ENCODE measurements at regions of chr16 and their contacts with region 1.

Region 1: DNA sequence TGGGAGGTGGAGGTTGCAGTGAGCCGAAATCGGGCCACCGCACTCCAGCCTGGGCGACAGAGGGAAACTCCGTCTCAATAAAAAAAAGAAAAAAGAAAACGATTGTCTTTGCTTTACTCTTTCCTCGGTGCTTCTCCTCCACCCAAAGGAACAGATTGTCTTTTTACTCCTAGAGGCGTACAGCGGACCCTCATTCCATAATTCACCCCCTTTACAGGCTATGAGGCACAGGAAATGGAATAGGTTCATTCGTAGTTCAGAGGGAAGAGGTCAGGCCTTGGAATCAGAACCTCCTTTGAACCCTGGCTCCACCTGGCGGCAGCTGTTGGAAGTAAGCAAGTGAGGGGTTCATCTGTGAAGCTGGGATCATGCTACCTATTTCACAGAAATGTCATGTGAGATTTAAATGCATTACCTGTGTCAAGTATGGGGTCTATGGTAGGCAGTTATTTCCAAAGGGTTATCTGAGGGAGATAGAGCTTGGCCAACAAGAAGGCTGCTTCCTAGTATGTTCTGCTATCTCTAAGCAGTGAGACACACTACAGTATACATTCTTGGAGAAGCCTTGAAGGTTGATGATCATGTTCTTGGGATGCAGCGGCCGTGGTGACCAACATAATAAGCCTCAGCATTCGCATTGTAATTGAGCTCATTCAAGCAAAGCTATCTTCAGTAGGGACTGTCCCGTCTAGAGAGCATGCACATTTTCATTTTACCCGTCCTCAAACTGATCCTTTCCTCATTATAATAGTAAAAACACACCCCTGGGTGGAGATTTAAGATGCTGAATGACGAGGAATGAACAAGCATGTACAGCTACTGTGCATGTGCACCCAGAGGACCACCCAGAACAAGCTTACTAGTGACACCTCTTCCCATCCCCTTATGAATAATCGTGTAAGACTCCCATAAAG is 18.7 kb upstream of the ZNF689 start:
- DNase-seq: peak; percentile 85
- ATAC-seq: peak; percentile 93
- H3K4me3 ChIP-seq: peak overlapping the region in 3 of 5 experiments; percentile 8 to 37 (median 28)
- H3K4me3 Mint-ChIP-seq: peak overlapping the region; percentile 68
- H3K27ac ChIP-seq: no peak overlapping the region
- H3K27ac Mint-ChIP-seq: peak overlapping the region; percentile 78
- H3K4me1 ChIP-seq: peaks cover 0 to 15% of the 10 kb centered on the region in 2 donors
- H3K4me1 Mint-ChIP-seq: peaks cover 8% of the 10 kb centered on the region
- H3K27me3 ChIP-seq: no peaks in the 10 kb centered on the region
- H3K27me3 Mint-ChIP-seq: peaks cover 1% of the 10 kb centered on the region
- CTCF ChIP-seq: peak; percentile 95

Region 2: GRCh38 chr16:30429678-30430427 is 199.0 kb before region 1 on chr16 and contains the start of gene DCTPP1:
- CTCF ChIA-PET with region 1: interaction called, 25 read pairs
- POLR2A ChIA-PET with region 1: interaction called, 9 read pairs
- intact Hi-C with region 1: loop called (anchors 2 kb)
- DNase-seq: peak; percentile 99
- ATAC-seq: peak; percentile 97
- H3K4me3 ChIP-seq: peak within 1 kb of the TSS; percentile 78 to 98 (median 85)
- H3K4me3 Mint-ChIP-seq: no peak within 1 kb of the TSS
- H3K27ac ChIP-seq: peak within 1 kb of the TSS; percentile 79 to 86
- H3K27ac Mint-ChIP-seq: peak within 1 kb of the TSS; percentile 20
- H3K4me1 ChIP-seq: peaks cover 12 to 21% of the 10 kb centered on the region in 2 donors
- H3K4me1 Mint-ChIP-seq: peaks cover 17% of the 10 kb centered on the region
- H3K27me3 ChIP-seq: no peaks in the 10 kb centered on the region
- H3K27me3 Mint-ChIP-seq: no peaks in the 10 kb centered on the region
- CTCF ChIP-seq: peak; percentile 82
- total RNA-seq, gene DCTPP1: 25.0 and 28.9 TPM in 2 replicates

Region 3: DNA sequence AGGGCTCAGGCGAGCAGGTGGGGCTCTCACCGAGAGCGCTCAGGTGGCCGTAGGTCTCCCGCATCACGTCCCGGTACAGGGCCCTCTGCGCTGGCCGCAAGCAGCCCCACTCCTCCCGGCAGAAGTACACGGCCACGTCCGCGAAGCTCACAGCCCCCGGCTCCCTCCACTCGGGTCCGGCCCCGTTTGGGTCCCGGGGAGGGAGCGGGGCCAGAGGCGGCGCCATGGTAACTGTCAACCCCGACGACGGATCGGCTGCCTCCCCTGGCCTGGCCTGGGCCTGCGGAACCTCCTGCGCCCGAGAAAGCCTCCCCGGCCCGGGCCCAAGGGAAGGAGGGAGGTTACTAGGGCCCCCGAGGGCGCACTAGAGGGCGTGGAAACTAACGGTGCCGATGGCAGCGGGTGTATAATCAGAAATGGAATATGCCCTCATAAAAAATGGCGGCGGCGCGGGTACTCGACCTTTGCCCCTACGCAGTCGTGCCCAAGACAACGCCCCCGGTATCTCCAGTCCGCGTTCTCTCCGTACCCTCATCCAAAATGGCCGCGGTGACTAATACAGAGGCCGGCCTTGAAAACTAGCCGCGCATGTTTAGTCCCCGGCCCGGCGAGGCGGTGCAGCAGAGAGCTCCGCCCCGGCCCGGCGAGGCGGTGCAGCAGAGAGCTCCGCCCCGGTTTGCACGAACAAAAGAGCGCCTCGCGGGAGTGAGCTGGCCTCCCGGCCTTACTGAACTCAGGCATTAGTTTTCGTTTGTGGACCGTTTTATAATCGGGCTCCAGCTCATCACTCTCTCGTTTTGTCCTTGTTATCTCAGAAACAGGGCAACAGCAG is 70.7 kb before region 1 on chr16 and contains the start of gene ZNF764:
- CTCF ChIA-PET with region 1: interaction called, 22 read pairs
- POLR2A ChIA-PET with region 1: no interaction called
- intact Hi-C with region 1: loop called (anchors 1 kb)
- DNase-seq: peak; percentile 97
- ATAC-seq: peak; percentile 92
- H3K4me3 ChIP-seq: peak within 1 kb of the TSS in 4 of 5 experiments; percentile 80 to 91 (median 88)
- H3K4me3 Mint-ChIP-seq: peak within 1 kb of the TSS; percentile 86
- H3K27ac ChIP-seq: peak within 1 kb of the TSS; percentile 95 to 97
- H3K27ac Mint-ChIP-seq: peak within 1 kb of the TSS; percentile 91
- H3K4me1 ChIP-seq: peaks cover 14 to 35% of the 10 kb centered on the region in 2 donors
- H3K4me1 Mint-ChIP-seq: peaks cover 42% of the 10 kb centered on the region
- H3K27me3 ChIP-seq: no peaks in the 10 kb centered on the region
- H3K27me3 Mint-ChIP-seq: no peaks in the 10 kb centered on the region
- CTCF ChIP-seq: no peak
- total RNA-seq, gene ZNF764: 19.7 and 20.9 TPM in 2 replicates

Region 4: GRCh38 chr16:30609926-30610839 is 18.7 kb before region 1 on chr16 and contains the start of gene ZNF689:
- CTCF ChIA-PET with region 1: interaction called, 17 read pairs
- POLR2A ChIA-PET with region 1: interaction called, 5 read pairs
- intact Hi-C with region 1: loop called (anchors 1 kb)
- DNase-seq: peak; percentile 97
- ATAC-seq: peak; percentile 88
- H3K4me3 ChIP-seq: peak within 1 kb of the TSS; percentile 84 to 98 (median 91)
- H3K4me3 Mint-ChIP-seq: peak within 1 kb of the TSS; percentile 98
- H3K27ac ChIP-seq: peak within 1 kb of the TSS; percentile 82 to 96
- H3K27ac Mint-ChIP-seq: peak within 1 kb of the TSS; percentile 96
- H3K4me1 ChIP-seq: peaks cover 14 to 24% of the 10 kb centered on the region in 2 donors
- H3K4me1 Mint-ChIP-seq: peaks cover 21% of the 10 kb centered on the region
- H3K27me3 ChIP-seq: no peaks in the 10 kb centered on the region
- H3K27me3 Mint-ChIP-seq: no peaks in the 10 kb centered on the region
- CTCF ChIP-seq: no peak
- total RNA-seq, gene ZNF689: 11.9 and 12.4 TPM in 2 replicates

Region 5: DNA sequence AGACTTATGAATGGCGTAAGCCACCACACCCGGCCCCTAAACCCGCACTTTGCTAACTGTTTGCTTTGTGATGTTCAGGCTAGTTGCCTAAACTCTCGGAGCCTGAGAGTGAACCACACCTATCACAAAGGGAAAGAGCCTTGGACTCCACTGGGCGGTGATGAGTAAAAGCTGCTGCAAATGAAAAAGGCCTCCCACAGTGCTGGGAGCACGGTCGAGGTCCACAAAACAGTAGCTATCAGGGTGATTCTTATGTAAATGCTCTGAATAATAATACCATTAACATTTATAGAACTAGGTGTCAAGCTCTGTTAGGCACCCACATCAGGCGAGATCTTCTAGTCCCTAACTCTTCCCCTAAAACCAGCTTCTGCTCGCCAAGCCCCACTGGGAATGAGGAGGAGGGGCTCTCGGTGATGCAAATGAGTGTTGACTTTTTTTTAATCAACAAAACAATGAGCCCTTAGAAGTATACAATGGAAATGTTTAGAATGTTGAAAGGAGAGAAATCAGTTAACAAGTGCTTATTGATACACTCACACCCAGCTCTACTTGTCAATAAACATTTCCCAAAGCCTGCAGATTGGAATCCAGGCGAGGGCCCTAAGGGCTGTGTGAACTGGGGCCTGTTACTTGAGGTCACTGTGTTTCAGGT is 49.2 kb after region 1 on chr16:
- CTCF ChIA-PET with region 1: no interaction called
- POLR2A ChIA-PET with region 1: no interaction called
- intact Hi-C with region 1: no loop called
- DNase-seq: no peak
- ATAC-seq: no peak
- H3K4me3 ChIP-seq: no peak overlapping the region
- H3K4me3 Mint-ChIP-seq: no peak overlapping the region
- H3K27ac ChIP-seq: no peak overlapping the region
- H3K27ac Mint-ChIP-seq: no peak overlapping the region
- H3K4me1 ChIP-seq: no peaks in the 10 kb centered on the region
- H3K4me1 Mint-ChIP-seq: no peaks in the 10 kb centered on the region
- H3K27me3 ChIP-seq: no peaks in the 10 kb centered on the region
- H3K27me3 Mint-ChIP-seq: no peaks in the 10 kb centered on the region
- CTCF ChIP-seq: no peak

Region 6: GRCh38 chr16:30692381-30693064 is 63.6 kb after region 1 on chr16:
- CTCF ChIA-PET with region 1: interaction called, 16 read pairs
- POLR2A ChIA-PET with region 1: interaction called, 3 read pairs
- intact Hi-C with region 1: loop called (anchors 1 kb)
- DNase-seq: no peak
- ATAC-seq: no peak
- H3K4me3 ChIP-seq: no peak overlapping the region
- H3K4me3 Mint-ChIP-seq: no peak overlapping the region
- H3K27ac ChIP-seq: no peak overlapping the region
- H3K27ac Mint-ChIP-seq: peak overlapping the region; percentile 13
- H3K4me1 ChIP-seq: peaks cover 8 to 10% of the 10 kb centered on the region in 2 donors
- H3K4me1 Mint-ChIP-seq: peaks cover 10% of the 10 kb centered on the region
- H3K27me3 ChIP-seq: no peaks in the 10 kb centered on the region
- H3K27me3 Mint-ChIP-seq: no peaks in the 10 kb centered on the region
- CTCF ChIP-seq: no peak

Region 7: DNA sequence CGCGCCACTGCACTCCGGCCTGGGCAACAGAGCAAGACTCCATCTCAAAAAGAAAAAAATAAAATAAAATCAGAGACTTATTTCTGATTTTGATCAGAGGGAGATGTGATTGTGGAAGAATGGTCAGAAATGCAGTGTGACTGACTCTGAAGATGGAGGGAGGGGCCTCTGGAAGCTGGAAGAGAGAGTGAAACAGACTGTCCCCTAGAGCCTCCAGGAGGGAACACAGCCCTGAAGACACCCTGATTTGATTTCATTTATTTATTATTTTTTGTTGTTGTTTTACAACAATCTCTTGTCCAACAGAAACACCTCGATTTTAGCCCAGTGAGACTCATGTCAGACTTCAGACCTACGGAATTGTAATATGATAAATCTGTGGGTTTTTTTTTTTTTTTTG is 238.9 kb after region 1 on chr16:
- CTCF ChIA-PET with region 1: no interaction called
- POLR2A ChIA-PET with region 1: no interaction called
- intact Hi-C with region 1: no loop called
- DNase-seq: no peak
- ATAC-seq: no peak
- H3K4me3 ChIP-seq: no peak overlapping the region
- H3K4me3 Mint-ChIP-seq: no peak overlapping the region
- H3K27ac ChIP-seq: no peak overlapping the region
- H3K27ac Mint-ChIP-seq: no peak overlapping the region
- H3K4me1 ChIP-seq: no peaks in the 10 kb centered on the region
- H3K4me1 Mint-ChIP-seq: peaks cover 5% of the 10 kb centered on the region
- H3K27me3 ChIP-seq: no peaks in the 10 kb centered on the region
- H3K27me3 Mint-ChIP-seq: no peaks in the 10 kb centered on the region
- CTCF ChIP-seq: no peak